HAP-1 (cell line): ENCODE measurements at regions of chr1 and their contacts with region 1.

Region 1: GRCh38 chr1:26109229-26110164 is 2.1 kb upstream of the PDIK1L start:
- DNase-seq: no peak
- H3K4me3 ChIP-seq: no peak overlapping the region; the same call in 1 of the 2 replicates
- H3K4me1 ChIP-seq: peaks cover 15% of the 10 kb centered on the region
- H3K27me3 ChIP-seq: no peaks in the 10 kb centered on the region

Region 2: DNA sequence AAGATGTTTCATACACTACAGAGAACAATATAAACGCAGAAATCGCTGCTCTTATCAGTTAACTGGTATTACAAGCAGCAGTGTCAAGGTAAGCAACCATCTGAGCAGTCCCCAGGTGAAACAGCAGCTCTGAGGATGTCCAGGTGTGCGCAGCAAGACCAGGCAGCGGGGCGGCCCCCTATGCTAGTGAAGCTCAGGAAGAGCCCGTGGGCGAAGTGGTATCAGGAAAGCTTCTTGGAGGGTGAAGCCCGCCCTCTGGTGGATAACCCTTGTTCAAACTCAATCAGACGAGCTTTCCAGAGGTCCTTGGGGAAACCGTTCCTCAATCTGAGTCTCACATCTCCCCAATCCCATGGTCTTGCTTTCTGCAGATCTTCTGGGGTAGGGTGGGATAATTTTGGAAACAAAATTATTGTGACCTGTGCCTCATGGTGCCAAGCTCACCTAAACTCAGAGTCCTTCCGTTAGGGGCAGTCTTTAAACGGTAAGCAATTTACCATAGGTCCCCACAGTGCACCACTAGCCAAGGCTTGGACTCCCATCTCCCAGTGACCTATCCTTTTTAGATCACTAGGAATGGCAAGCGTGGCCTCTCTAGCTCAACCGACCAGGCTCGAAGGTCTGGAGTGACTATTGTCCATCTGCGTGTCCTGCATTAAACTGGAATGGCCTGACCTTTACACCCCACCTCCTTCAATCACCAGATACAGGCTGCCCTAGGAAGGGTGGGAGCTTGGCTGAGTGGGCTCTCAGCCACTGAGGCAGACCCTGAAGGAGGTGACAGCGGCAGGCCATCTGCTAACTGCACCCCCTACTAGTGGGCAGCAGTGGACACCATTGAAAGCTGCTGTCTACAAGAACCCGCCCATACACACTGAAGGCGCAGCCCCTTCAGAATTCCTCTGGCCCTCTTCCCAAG is 35.8 kb after region 1 on chr1:
- in situ Hi-C with region 1: loop called (anchors 5 kb)
- DNase-seq: peak; percentile 84 to 88
- H3K4me3 ChIP-seq: no peak overlapping the region
- H3K4me1 ChIP-seq: no peaks in the 10 kb centered on the region
- H3K27me3 ChIP-seq: 0 out of 2 replicates have a peak, but pooled peaks cover 2% of the 10 kb centered on the region